Heart left ventricle (tissue), 16 donors: ENCODE measurements at regions of chr2 and their contacts with region 1.

Region 1: DNA sequence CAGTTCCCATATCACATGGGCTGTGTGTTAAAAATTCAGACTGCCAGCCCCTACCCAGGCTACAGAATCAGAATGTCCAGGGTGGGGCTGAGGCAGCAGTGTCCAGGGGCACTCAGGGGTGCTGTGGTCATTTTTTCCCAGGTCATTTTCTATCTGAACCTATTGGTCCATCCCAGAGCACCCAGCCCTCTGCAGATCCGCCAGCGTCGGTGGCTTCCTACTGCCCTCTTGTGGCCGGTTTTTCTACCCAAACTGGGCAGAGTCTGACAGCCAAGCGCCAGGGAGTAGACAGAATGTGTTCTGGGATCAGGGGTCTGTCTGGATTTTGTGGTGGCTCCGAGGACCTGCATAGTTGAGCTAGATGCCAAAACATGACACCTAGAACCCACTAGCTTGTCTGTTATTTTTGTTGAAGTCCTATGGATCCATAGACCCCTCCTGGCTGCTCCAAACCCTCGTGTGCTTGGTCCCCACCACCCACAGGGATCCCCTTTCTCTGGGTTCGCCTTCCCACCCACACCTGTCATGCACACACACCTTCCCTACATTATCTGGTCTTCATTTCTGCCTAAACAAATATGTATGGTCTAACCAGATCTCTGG is 34.1 kb upstream of the RMDN2 start:
- DNase-seq: peak; percentile 58 to 80 (median 70)
- ATAC-seq: peak; percentile 82 to 94 (median 90)
- H3K4me3 ChIP-seq: no peak overlapping the region
- H3K27ac ChIP-seq: no peak overlapping the region
- H3K4me1 ChIP-seq: peaks cover 0 to 50% (median 3%) of the 10 kb centered on the region in 12 donors
- H3K27me3 ChIP-seq: peaks cover 0 to 9% (median 0%) of the 10 kb centered on the region in 9 donors
- CTCF ChIP-seq: peak; percentile 67 to 85 (median 75)
- POLR2A ChIP-seq: no peak

Region 2: DNA sequence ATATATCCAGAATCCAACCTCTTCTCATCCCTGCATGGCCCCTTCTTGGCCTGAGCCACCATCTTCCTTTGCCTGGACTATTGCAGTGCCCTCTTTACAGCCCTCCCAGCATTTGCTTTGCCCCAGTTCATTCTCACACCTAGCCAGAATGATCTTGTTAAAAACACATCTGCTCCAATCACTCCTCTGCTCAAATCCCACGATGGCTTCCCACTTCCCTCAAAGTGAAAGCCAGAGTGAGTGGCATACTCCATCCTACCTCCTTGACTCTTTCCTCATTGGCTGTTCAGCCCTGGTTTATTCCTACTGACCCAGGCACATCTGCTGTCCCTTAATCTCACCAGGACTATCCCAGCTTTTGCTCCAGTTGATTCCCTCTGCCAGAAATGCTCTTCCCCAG is 717.3 kb before region 1 on chr2:
- intact Hi-C with region 1: loop called in 2 of 10 experiments (anchors 10 kb)
- DNase-seq: no peak
- ATAC-seq: no peak
- H3K4me3 ChIP-seq: no peak overlapping the region
- H3K27ac ChIP-seq: no peak overlapping the region
- H3K4me1 ChIP-seq: no peaks in the 10 kb centered on the region
- H3K27me3 ChIP-seq: no peaks in the 10 kb centered on the region
- CTCF ChIP-seq: no peak
- POLR2A ChIP-seq: no peak

Region 3: GRCh38 chr2:37389989-37390765 is 500.8 kb before region 1 on chr2:
- intact Hi-C with region 1: loop called in 5 of 10 experiments (anchors 5 kb)
- DNase-seq: peak in 3 of 5 donors; percentile 30 to 34 (median 31)
- ATAC-seq: peak in 3 of 4 donors; percentile 67 to 93 (median 74)
- H3K4me3 ChIP-seq: no peak overlapping the region
- H3K27ac ChIP-seq: peak overlapping the region in 8 of 12 donors; percentile 26 to 87 (median 54)
- H3K4me1 ChIP-seq: peaks cover 0 to 46% (median 9%) of the 10 kb centered on the region in 12 donors
- H3K27me3 ChIP-seq: no peaks in the 10 kb centered on the region
- CTCF ChIP-seq: no peak
- POLR2A ChIP-seq: no peak

Region 4: GRCh38 chr2:37397166-37397565 is 493.8 kb before region 1 on chr2:
- intact Hi-C with region 1: loop called in 6 of 10 experiments (anchors 2 to 5 kb)
- DNase-seq: no peak
- ATAC-seq: no peak
- H3K4me3 ChIP-seq: no peak overlapping the region
- H3K27ac ChIP-seq: no peak overlapping the region
- H3K4me1 ChIP-seq: peaks cover 0 to 27% (median 0%) of the 10 kb centered on the region in 12 donors
- H3K27me3 ChIP-seq: no peaks in the 10 kb centered on the region
- CTCF ChIP-seq: no peak
- POLR2A ChIP-seq: no peak

Region 5: DNA sequence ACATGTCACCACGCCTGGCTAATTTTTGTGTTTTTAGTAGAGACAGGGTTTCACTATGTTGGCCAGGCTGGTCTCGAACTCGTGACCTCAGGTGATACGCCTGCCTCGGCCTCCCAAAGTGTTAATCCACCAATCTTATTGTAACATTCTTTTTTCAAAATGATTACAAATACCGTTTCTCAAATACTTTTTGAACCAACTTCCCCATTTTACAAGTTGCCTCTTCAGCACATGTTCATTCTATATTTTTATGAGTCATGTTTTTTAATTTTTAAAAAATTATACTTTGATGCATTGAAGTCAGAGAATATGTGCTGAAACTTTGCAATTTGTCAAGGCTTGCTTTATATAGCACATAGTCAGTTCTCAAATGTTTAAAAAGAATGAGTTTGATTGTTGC is 488.4 kb before region 1 on chr2:
- intact Hi-C with region 1: loop called in 7 of 10 experiments (anchors 2 to 5 kb)
- DNase-seq: no peak
- ATAC-seq: no peak
- H3K4me3 ChIP-seq: no peak overlapping the region
- H3K27ac ChIP-seq: no peak overlapping the region
- H3K4me1 ChIP-seq: peaks cover 0 to 4% (median 0%) of the 10 kb centered on the region in 12 donors
- H3K27me3 ChIP-seq: no peaks in the 10 kb centered on the region
- CTCF ChIP-seq: no peak
- POLR2A ChIP-seq: no peak

Region 6: GRCh38 chr2:38030635-38031355 is 139.8 kb after region 1 on chr2:
- intact Hi-C with region 1: no loop called
- DNase-seq: no peak
- ATAC-seq: no peak
- H3K4me3 ChIP-seq: no peak overlapping the region
- H3K27ac ChIP-seq: no peak overlapping the region
- H3K4me1 ChIP-seq: peaks cover 0 to 18% (median 7%) of the 10 kb centered on the region in 12 donors
- H3K27me3 ChIP-seq: peaks cover 0 to 7% (median 3%) of the 10 kb centered on the region in 9 donors
- CTCF ChIP-seq: no peak
- POLR2A ChIP-seq: no peak